ENCODE measurements at regions of chr12 and their contacts with region 1.

Region 1: DNA sequence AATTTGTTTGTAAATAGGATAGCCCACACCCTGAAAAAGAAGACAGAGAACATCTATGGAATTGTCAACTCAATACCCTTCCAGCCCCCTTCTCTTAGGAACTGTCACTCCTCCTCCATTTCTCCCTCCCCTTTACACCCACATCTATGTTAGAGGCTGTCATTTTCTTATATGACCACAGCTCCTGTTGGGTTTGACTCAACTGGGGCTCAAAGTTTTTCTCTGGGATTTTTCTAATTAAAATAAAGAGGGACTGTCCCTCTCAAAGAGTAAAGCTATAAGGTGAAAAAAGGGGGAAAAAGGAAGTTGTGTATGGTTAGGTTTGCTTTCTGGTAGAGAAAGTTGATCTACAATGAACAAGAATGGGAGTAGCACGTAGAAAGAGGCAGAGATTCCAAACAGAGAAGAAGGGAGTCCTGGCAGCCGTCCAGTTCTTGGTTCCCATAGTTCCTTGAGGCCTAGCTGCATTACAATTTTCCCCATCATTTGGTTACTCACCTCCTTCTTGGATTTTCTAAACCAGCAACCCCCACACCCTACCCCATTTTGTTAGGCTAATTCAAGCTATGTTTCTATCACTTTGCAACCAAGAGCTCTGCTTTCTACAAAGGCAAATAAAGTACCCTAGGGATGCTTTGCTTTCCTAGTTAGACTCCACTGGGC is 44.3 kb upstream of the STK38L start:
- DNase-seq: no peak
- ATAC-seq: peak; percentile 41; the same call in 2 of the 3 replicates
- H3K4me3 ChIP-seq: no peak overlapping the region
- H3K27ac ChIP-seq: no peak overlapping the region
- H3K4me1 ChIP-seq: peaks cover 6% of the 10 kb centered on the region; the same call in 1 of the 2 replicates
- H3K27me3 ChIP-seq: no peaks in the 10 kb centered on the region
- CTCF ChIP-seq: no peak
- EP300 ChIP-seq: no peak
- POLR2A ChIP-seq: no peak
- RAD21 ChIP-seq: no peak

Region 2: GRCh38 chr12:27185234-27186021 is 14.3 kb before region 1 on chr12:
- CTCF ChIA-PET with region 1: interaction called, 7 read pairs
- POLR2A ChIA-PET with region 1: interaction called, 19 read pairs
- RAD21 ChIA-PET with region 1: interaction called, 28 read pairs
- SMC1A ChIA-PET with region 1: interaction called, 139 read pairs
- in situ Hi-C with region 1: no loop called
- intact Hi-C with region 1: no loop called
- DNase-seq: peak; percentile 85
- ATAC-seq: peak; percentile 98
- H3K4me3 ChIP-seq: no peak overlapping the region
- H3K27ac ChIP-seq: peak overlapping the region; percentile 82
- H3K4me1 ChIP-seq: peaks cover 20% of the 10 kb centered on the region
- H3K27me3 ChIP-seq: no peaks in the 10 kb centered on the region
- CTCF ChIP-seq: no peak
- EP300 ChIP-seq: peak; percentile 24 to 61; a peak in 2 of 4 replicates
- POLR2A ChIP-seq: no peak
- RAD21 ChIP-seq: peak; percentile 23; the same call in 1 of the 2 replicates

Region 3: GRCh38 chr12:27412047-27412446 is 212.3 kb after region 1 on chr12:
- CTCF ChIA-PET with region 1: no interaction called
- POLR2A ChIA-PET with region 1: no interaction called
- RAD21 ChIA-PET with region 1: no interaction called
- SMC1A ChIA-PET with region 1: no interaction called
- in situ Hi-C with region 1: no loop called
- intact Hi-C with region 1: no loop called
- DNase-seq: no peak
- ATAC-seq: no peak
- H3K4me3 ChIP-seq: no peak overlapping the region
- H3K27ac ChIP-seq: no peak overlapping the region
- H3K4me1 ChIP-seq: no peaks in the 10 kb centered on the region
- H3K27me3 ChIP-seq: no peaks in the 10 kb centered on the region
- CTCF ChIP-seq: no peak
- EP300 ChIP-seq: no peak
- POLR2A ChIP-seq: no peak
- RAD21 ChIP-seq: no peak

Region 4: DNA sequence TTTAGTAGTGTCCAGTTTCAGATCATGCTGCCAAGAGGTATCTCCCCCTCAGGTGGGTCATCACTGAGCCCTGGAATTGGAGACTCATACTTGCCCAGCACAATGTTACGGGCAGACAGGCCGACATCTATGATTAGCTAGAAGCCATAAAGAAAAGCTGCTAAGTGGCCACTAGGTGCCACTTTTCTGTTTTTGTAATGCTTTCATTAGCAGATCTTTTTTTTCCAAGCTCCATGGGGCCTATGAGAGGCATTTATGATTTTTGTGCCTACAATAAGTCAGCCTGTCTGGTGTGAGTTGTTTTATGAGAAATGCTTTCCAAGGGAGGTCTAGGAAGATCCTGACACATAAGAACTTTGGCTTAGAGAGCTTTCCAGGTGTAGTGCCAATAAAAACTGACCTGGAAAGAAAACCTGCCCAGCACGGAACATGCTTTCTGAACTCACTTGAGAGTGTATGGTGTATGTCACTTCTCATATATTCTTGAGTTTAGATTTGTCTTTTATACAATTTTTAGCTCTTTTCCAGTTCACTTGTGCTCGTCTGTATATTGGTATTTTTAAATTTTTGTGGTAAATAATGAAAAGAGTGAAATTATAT is 225.0 kb after region 1 on chr12:
- CTCF ChIA-PET with region 1: no interaction called
- POLR2A ChIA-PET with region 1: no interaction called
- RAD21 ChIA-PET with region 1: no interaction called
- SMC1A ChIA-PET with region 1: no interaction called
- in situ Hi-C with region 1: no loop called
- intact Hi-C with region 1: no loop called
- DNase-seq: no peak
- ATAC-seq: peak; percentile 62
- H3K4me3 ChIP-seq: no peak overlapping the region
- H3K27ac ChIP-seq: no peak overlapping the region
- H3K4me1 ChIP-seq: no peaks in the 10 kb centered on the region
- H3K27me3 ChIP-seq: no peaks in the 10 kb centered on the region
- CTCF ChIP-seq: peak; percentile 38 to 48 (median 39); a peak in 5 of 6 replicates
- EP300 ChIP-seq: no peak
- POLR2A ChIP-seq: no peak
- RAD21 ChIP-seq: peak; percentile 45